Thyroid gland (tissue), 4 donors: ENCODE measurements at regions of chr3 and their contacts with region 1.

Region 1: GRCh38 chr3:194814878-194815357 is 129.2 kb downstream of the FAM43A start:
- DNase-seq: no peak
- H3K4me3 ChIP-seq: no peak overlapping the region
- H3K27ac ChIP-seq: no peak overlapping the region
- H3K4me1 ChIP-seq: no peaks in the 10 kb centered on the region
- H3K27me3 ChIP-seq: no peaks in the 10 kb centered on the region
- CTCF ChIP-seq: no peak
- POLR2A ChIP-seq: no peak

Region 2: DNA sequence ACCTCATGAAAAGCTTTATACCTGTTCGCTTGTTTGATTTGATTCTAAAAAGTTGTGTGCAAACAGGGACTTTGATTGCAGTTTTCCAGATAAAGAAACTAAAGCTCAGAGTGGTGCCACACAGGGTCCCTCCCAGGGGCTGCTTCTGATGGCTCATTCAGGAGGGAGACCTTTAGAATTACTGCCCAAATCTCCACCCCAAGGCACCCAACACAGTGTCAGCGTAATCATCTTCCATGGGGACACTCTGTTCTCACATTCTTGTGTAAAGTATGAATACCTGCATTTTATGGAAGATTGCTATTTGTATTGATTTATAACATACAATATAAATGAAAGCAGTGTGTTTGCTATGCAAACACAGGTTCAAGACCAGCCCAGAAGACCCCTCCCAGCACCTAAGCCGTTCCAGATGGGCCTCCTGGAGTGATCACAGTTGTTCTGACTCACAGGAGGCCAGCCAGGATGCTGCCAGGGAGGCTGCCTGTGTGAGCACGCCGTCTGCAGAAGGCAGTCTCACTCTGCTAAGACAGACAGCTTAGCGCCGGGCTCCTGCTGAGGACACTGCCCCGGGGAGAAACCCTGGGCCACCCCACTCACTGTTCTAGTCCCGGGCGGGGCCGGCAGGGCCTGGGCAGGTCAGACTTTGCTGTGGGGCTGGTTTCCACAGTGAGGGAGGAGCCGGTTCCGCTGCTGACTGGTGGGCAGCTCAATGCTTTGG is 56.4 kb after region 1 on chr3:
- intact Hi-C with region 1: loop called (anchors 10 kb)
- DNase-seq: peak; percentile 18 to 33
- H3K4me3 ChIP-seq: no peak overlapping the region
- H3K27ac ChIP-seq: no peak overlapping the region
- H3K4me1 ChIP-seq: peaks cover 0 to 26% of the 10 kb centered on the region in 2 donors
- H3K27me3 ChIP-seq: no peaks in the 10 kb centered on the region
- CTCF ChIP-seq: no peak
- POLR2A ChIP-seq: no peak

Region 3: GRCh38 chr3:195207731-195208585 is 393.0 kb after region 1 on chr3:
- intact Hi-C with region 1: no loop called
- DNase-seq: no peak
- H3K4me3 ChIP-seq: no peak overlapping the region
- H3K27ac ChIP-seq: no peak overlapping the region
- H3K4me1 ChIP-seq: peaks cover 34 to 51% of the 10 kb centered on the region in 2 donors
- H3K27me3 ChIP-seq: no peaks in the 10 kb centered on the region
- CTCF ChIP-seq: no peak
- POLR2A ChIP-seq: no peak